ENCODE measurements at regions of chr7 and their contacts with region 1.

Region 1: GRCh38 chr7:80392229-80393169 is 119.4 kb downstream of the GNAT3 start:
- DNase-seq: no peak
- H3K4me3 ChIP-seq: no peak overlapping the region
- H3K27ac ChIP-seq: no peak overlapping the region
- H3K4me1 ChIP-seq: peaks cover 0 to 3% of the 10 kb centered on the region in 2 donors
- H3K27me3 ChIP-seq: no peaks in the 10 kb centered on the region
- CTCF ChIP-seq: peak; percentile 40 to 81 (median 68)
- POLR2A ChIP-seq: no peak

Region 2: GRCh38 chr7:80053124-80053523 is 339.4 kb before region 1 on chr7:
- intact Hi-C with region 1: loop called in 1 of 2 experiments (anchors 10 kb)
- DNase-seq: peak in 1 of 7 donors; percentile 59
- H3K4me3 ChIP-seq: no peak overlapping the region
- H3K27ac ChIP-seq: no peak overlapping the region
- H3K4me1 ChIP-seq: peaks cover 0 to 4% of the 10 kb centered on the region in 2 donors
- H3K27me3 ChIP-seq: no peaks in the 10 kb centered on the region
- CTCF ChIP-seq: no peak
- POLR2A ChIP-seq: no peak

Region 3: DNA sequence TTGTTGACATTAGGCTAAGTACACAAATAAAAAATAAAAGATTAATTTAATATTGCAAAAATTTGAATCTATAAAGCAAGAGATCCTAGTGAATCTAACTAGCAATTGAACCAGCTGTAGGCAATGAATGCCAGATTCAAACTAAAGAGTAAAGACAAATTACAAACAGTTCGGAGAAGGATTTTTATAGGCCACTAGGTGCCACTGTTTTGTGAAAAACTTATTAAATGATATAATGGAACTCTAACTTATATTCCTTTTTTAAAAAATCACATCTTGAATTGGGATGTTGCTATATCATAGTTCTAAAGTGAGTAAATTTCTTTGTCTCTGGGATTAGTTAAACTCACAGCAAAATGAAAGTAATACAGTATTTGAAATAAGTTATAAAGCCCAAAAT is 297.0 kb before region 1 on chr7:
- intact Hi-C with region 1: loop called in 1 of 2 experiments (anchors 10 kb)
- DNase-seq: no peak
- H3K4me3 ChIP-seq: no peak overlapping the region
- H3K27ac ChIP-seq: no peak overlapping the region
- H3K4me1 ChIP-seq: no peaks in the 10 kb centered on the region
- H3K27me3 ChIP-seq: no peaks in the 10 kb centered on the region
- CTCF ChIP-seq: peak; percentile 35 to 65 (median 55)
- POLR2A ChIP-seq: no peak

Region 4: GRCh38 chr7:80428161-80429054 is 35.9 kb after region 1 on chr7:
- intact Hi-C with region 1: no loop called
- DNase-seq: peak; percentile 21 to 65 (median 40)
- H3K4me3 ChIP-seq: no peak overlapping the region
- H3K27ac ChIP-seq: no peak overlapping the region
- H3K4me1 ChIP-seq: no peaks in the 10 kb centered on the region
- H3K27me3 ChIP-seq: no peaks in the 10 kb centered on the region
- CTCF ChIP-seq: peak; percentile 40 to 92 (median 84)
- POLR2A ChIP-seq: no peak